ENCODE measurements at regions of chr2 and their contacts with region 1.

Region 1: GRCh38 chr2:136378712-136379595 is 261.0 kb upstream of the CXCR4 start:
- DNase-seq: peak; percentile 58
- H3K4me3 Mint-ChIP-seq: no peak overlapping the region
- H3K27ac Mint-ChIP-seq: no peak overlapping the region
- H3K4me1 Mint-ChIP-seq: peaks cover 23% of the 10 kb centered on the region
- H3K27me3 Mint-ChIP-seq: no peaks in the 10 kb centered on the region
- CTCF ChIP-seq: peak; percentile 68

Region 2: DNA sequence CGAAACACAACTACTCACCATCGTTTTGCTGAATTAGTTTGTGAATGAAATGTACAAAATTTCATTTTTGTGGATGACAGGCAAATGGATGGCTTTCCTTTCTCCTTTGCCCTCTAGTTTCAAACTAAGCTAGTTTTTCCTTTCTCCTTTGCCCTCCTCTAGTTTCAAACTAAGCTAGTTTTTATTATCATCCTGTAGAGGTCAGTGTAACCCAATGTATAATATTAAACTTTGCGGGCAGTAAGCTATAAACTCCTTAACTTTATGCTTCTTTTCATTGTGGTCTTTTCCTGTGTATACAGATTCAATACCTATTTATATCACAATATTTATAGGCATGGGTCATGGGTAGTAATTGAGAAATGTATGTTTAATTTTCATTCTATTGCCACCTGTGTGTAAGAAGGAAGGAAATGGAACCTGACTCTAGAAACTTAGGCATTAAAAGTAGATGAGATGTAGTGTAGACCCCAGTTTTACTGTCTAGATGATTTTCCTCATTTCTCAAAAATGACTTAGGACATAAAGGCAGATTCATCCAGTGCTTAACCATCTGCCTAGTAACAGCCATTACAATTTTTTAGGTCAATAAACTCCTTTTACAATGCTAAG is 1389.9 kb before region 1 on chr2:
- CTCF ChIA-PET with region 1: no interaction called
- POLR2A ChIA-PET with region 1: no interaction called
- intact Hi-C with region 1: loop called (anchors 5 kb)
- DNase-seq: peak; percentile 46
- H3K4me3 Mint-ChIP-seq: no peak overlapping the region
- H3K27ac Mint-ChIP-seq: no peak overlapping the region
- H3K4me1 Mint-ChIP-seq: no peaks in the 10 kb centered on the region
- H3K27me3 Mint-ChIP-seq: peaks cover 50% of the 10 kb centered on the region
- CTCF ChIP-seq: peak; percentile 46

Region 3: DNA sequence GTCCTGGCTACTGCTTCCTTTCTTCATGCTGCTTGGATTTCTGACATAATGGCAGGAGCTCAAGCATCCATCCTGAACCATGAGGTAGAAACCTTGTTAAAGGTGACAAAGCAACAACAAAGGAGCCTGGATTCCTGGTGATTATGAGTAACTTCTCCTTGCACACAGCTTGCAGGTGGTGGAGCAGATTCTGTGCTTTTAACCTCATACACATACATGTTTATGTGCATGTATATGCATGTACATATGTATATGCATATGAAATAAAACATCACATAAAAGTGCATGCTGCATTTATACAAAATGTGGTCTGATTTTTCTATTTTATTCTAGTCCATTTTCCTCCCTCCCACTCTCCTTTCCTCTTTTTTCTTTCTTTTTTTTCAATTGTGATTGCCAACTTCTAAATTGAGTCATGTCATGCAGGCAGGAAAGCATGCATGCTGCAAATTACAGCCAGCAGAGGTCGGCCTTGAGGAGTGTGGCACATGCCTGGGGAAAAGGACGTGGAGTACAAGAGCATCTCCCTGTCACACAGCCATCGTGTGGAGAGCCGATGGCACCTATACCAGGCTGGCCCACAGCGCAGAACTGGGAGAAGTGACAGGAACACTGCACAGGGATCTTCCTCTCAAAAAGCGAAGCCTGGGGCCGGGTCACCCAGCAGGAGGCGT is 559.9 kb before region 1 on chr2:
- CTCF ChIA-PET with region 1: interaction called, 3 read pairs
- POLR2A ChIA-PET with region 1: no interaction called
- intact Hi-C with region 1: loop called (anchors 5 kb)
- DNase-seq: peak; percentile 38
- H3K4me3 Mint-ChIP-seq: no peak overlapping the region
- H3K27ac Mint-ChIP-seq: no peak overlapping the region
- H3K4me1 Mint-ChIP-seq: no peaks in the 10 kb centered on the region
- H3K27me3 Mint-ChIP-seq: no peaks in the 10 kb centered on the region
- CTCF ChIP-seq: peak; percentile 13

Region 4: DNA sequence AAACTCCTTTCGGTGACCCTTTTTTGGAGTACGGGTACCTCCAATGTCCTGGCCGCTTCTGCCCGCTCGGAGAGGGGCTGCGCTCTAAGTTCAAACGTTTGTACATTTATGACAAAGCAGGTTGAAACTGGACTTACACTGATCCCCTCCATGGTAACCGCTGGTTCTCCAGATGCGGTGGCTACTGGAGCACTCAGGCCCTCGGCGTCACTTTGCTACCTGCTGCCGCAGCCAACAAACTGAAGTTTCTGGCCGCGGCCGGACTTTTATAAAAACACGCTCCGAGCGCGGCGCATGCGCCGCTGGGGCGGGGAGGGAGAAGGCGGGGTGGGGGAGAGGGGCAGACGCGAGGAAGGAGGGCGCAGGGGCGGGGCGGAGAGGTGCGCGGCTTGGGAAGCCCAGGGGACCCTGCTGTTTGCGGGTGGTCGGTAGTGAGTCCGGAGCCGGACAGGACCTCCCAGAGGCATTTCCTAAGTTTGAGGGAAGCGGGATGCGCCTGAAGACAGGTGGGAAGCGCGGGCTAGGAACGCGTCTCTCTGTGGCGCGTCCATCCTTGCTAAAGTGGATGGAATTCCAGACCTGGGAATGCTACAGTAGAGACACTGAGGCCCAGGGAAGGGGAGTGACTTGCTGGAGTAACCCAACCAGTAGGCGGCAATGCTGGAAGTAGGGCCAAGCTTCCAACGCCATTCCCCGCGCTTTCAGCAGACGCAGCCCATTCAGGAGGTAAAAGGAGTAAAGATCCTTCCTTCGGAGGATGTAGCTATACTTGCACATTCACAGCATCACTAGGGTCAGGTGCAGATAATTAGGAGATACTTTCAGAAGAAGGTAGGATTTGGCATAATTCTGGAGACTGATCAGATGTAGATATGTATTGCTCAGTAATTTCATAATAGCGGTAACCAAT is 260.8 kb before region 1 on chr2 and contains the start of gene CXCR4:
- CTCF ChIA-PET with region 1: interaction called, 4 read pairs
- POLR2A ChIA-PET with region 1: no interaction called
- intact Hi-C with region 1: loop called (anchors 5 kb)
- DNase-seq: peak; percentile 38
- H3K4me3 Mint-ChIP-seq: peak within 1 kb of the TSS; percentile 87
- H3K27ac Mint-ChIP-seq: no peak within 1 kb of the TSS
- H3K4me1 Mint-ChIP-seq: peaks cover 15% of the 10 kb centered on the region
- H3K27me3 Mint-ChIP-seq: no peaks in the 10 kb centered on the region
- CTCF ChIP-seq: no peak
- total RNA-seq, gene CXCR4: 0.54 and 1.1 TPM in 2 replicates

Region 5: DNA sequence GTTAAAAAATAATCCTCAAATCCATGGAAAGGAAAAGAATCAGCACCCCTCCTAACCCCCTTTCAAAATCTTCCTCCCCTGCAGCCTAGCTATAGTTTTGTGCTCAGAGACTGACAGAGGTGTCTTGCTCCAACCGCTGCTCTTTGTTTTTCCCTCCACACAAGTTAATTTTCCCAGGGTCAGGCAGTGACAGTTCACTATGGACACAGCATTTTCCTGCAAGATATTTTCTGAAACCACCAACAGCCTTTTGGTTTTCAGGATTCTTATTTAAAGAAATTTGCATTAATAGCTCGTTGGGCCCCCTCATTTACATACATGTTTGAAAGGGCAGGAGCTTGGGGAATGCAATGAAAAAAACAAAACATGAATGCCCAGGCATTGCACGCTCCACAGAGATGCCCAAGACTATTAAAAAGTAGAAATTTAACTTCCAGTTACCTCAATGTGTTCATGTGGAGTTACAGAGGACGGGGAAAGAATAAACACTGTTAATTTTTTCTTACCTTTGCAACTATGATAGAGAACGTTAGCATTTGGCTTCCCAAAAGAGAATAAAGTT is 189.7 kb before region 1 on chr2:
- CTCF ChIA-PET with region 1: interaction called, 10 read pairs
- POLR2A ChIA-PET with region 1: no interaction called
- intact Hi-C with region 1: no loop called
- DNase-seq: no peak
- H3K4me3 Mint-ChIP-seq: no peak overlapping the region
- H3K27ac Mint-ChIP-seq: no peak overlapping the region
- H3K4me1 Mint-ChIP-seq: no peaks in the 10 kb centered on the region
- H3K27me3 Mint-ChIP-seq: no peaks in the 10 kb centered on the region
- CTCF ChIP-seq: no peak

Region 6: DNA sequence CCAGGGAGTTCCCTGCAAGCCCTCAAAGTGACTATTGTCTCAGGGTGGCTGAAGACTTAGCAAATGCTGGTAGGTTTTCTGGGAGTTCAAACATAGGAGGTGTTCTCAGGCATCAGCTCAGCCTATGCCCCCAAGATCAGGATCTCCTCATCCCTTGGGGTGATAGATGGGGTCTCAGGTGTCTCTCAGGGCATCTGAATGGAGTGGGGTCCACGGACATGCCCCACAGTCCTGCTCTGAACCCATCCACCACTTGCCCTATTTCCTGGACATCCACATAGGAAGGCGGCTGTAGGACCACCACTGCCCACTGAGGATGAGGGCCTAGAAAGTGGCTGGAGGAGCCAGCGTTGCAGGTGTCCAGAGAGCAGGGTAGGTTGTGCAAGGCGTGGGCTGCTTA is 26.0 kb after region 1 on chr2:
- CTCF ChIA-PET with region 1: no interaction called
- POLR2A ChIA-PET with region 1: no interaction called
- intact Hi-C with region 1: no loop called
- DNase-seq: no peak
- H3K4me3 Mint-ChIP-seq: no peak overlapping the region
- H3K27ac Mint-ChIP-seq: no peak overlapping the region
- H3K4me1 Mint-ChIP-seq: no peaks in the 10 kb centered on the region
- H3K27me3 Mint-ChIP-seq: peaks cover 82% of the 10 kb centered on the region
- CTCF ChIP-seq: no peak

Measured in MCF 10A (cell line).